Posterior vena cava (tissue), 2 donors: ENCODE measurements at regions of chr7 and their contacts with region 1.

Region 1: DNA sequence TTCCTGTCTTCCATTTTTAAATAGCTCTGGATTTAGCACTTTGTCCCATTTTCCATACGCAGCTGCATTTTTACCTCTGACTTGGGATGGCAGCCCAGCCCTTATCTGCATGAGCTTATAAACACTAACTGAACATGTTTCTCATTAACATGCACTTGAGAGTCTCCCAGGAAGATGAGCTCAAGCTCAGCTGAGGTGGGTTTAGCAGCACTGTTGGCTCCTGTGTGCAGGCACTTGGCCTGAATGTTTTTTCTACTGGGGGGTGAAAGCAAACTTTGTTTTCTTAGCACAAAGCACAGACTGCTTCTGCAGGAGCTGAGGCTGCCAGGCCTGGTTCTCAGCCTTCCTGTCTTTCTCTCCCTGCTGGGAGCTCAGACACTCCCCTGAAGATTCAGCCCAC is 1093.6 kb upstream of the AUTS2 start:
- DNase-seq: no peak

Region 2: GRCh38 chr7:67947651-67948050 is 557.1 kb before region 1 on chr7:
- intact Hi-C with region 1: no loop called
- DNase-seq: no peak

Region 3: DNA sequence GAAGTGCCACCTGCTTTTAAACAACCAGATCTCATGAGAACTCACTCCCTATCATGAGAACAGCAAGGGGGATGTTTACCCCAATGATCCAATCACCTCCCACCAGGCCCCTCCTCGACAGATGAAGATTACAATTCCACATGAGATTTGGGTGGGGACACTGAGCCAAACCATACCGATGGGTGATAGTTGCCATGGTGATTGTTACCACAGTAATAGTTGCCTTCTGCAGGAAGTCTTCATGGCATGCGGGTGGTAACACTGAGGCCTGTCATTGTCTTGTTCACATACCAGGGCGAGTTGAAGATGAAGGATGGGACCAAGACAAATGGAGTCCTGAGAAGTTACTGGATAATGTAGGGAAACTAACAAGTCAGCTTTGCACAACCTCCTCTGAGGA is 45.5 kb before region 1 on chr7:
- intact Hi-C with region 1: loop called in 1 of 2 experiments (anchors 1 kb)
- DNase-seq: no peak

Region 4: GRCh38 chr7:70098133-70098561 is 1593.4 kb after region 1 on chr7:
- intact Hi-C with region 1: no loop called
- DNase-seq: no peak